HepG2 (cell line): ENCODE measurements at regions of chr1 and their contacts with region 1.

Region 1: DNA sequence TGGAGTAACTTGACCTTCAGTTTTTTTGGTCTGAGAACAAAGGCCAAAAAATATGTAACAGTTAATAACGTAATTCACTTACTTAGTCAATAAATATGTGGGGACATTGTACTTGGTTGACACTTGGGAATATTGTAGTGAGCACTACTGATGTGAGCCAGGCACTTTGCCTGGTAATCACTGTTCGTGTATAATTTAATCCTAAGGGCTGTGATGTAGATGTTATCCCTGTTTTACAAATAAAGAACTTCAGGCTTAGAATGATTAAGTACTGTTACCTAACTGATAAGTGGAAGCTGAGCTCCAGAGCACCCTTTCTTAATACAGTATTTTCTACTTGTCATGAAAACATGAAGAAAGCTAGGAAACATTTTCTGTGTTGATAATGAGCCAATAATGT is 28.0 kb downstream of the PTBP2 start:
- DNase-seq: no peak
- ATAC-seq: no peak
- H3K4me3 ChIP-seq: no peak overlapping the region
- H3K27ac ChIP-seq: no peak overlapping the region
- H3K4me1 ChIP-seq: peaks cover 16% of the 10 kb centered on the region
- H3K27me3 ChIP-seq: no peaks in the 10 kb centered on the region
- CTCF ChIP-seq: no peak
- EP300 ChIP-seq: no peak
- POLR2A ChIP-seq: no peak
- RAD21 ChIP-seq: no peak

Region 2: GRCh38 chr1:96596226-96596922 is 153.2 kb before region 1 on chr1:
- CTCF ChIA-PET with region 1: no interaction called
- POLR2A ChIA-PET with region 1: no interaction called
- in situ Hi-C with region 1: no loop called
- intact Hi-C with region 1: loop called (anchors 5 kb)
- DNase-seq: peak; percentile 63
- ATAC-seq: peak; percentile 99
- H3K4me3 ChIP-seq: no peak overlapping the region
- H3K27ac ChIP-seq: no peak overlapping the region
- H3K4me1 ChIP-seq: no peaks in the 10 kb centered on the region
- H3K27me3 ChIP-seq: no peaks in the 10 kb centered on the region
- CTCF ChIP-seq: peak; percentile 81
- EP300 ChIP-seq: no peak
- POLR2A ChIP-seq: no peak
- RAD21 ChIP-seq: peak; percentile 20; the same call in 1 of the 2 replicates

Region 3: GRCh38 chr1:96710708-96711477 is 38.7 kb before region 1 on chr1:
- CTCF ChIA-PET with region 1: no interaction called
- POLR2A ChIA-PET with region 1: no interaction called
- in situ Hi-C with region 1: no loop called
- intact Hi-C with region 1: no loop called
- DNase-seq: no peak
- ATAC-seq: no peak
- H3K4me3 ChIP-seq: no peak overlapping the region
- H3K27ac ChIP-seq: no peak overlapping the region
- H3K4me1 ChIP-seq: no peaks in the 10 kb centered on the region
- H3K27me3 ChIP-seq: no peaks in the 10 kb centered on the region; a peak in 1 of 5 replicates
- CTCF ChIP-seq: no peak
- EP300 ChIP-seq: no peak
- POLR2A ChIP-seq: no peak
- RAD21 ChIP-seq: no peak

Region 4: GRCh38 chr1:96815914-96816313 is 66.3 kb after region 1 on chr1:
- CTCF ChIA-PET with region 1: no interaction called
- POLR2A ChIA-PET with region 1: no interaction called
- in situ Hi-C with region 1: no loop called
- intact Hi-C with region 1: no loop called
- DNase-seq: no peak
- ATAC-seq: no peak
- H3K4me3 ChIP-seq: no peak overlapping the region
- H3K27ac ChIP-seq: no peak overlapping the region
- H3K4me1 ChIP-seq: no peaks in the 10 kb centered on the region
- H3K27me3 ChIP-seq: no peaks in the 10 kb centered on the region
- CTCF ChIP-seq: no peak
- EP300 ChIP-seq: no peak
- POLR2A ChIP-seq: no peak
- RAD21 ChIP-seq: no peak

Region 5: DNA sequence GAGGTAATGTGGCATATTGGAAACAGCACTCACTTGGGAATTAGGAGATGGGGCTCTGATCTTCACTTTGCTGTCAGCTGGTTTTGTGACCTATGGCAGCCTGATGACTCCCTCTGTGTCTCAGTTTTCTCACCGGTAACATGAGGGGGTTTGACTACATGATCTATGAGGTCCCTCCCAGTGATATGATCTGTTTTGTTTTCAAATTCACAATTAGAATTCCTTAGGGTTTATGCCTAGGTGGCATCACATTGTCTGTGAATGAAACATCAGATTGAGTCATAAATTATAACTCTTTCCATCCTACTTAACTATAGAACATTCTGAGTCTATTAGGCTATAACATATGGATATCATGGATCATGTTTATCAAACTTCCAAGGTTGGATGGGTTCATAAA is 358.6 kb after region 1 on chr1:
- CTCF ChIA-PET with region 1: no interaction called
- POLR2A ChIA-PET with region 1: no interaction called
- in situ Hi-C with region 1: no loop called
- intact Hi-C with region 1: no loop called
- DNase-seq: no peak
- ATAC-seq: no peak
- H3K4me3 ChIP-seq: no peak overlapping the region
- H3K27ac ChIP-seq: no peak overlapping the region
- H3K4me1 ChIP-seq: no peaks in the 10 kb centered on the region
- H3K27me3 ChIP-seq: no peaks in the 10 kb centered on the region
- CTCF ChIP-seq: no peak
- EP300 ChIP-seq: no peak
- POLR2A ChIP-seq: no peak
- RAD21 ChIP-seq: no peak